Sigmoid colon (tissue), 7 donors: ENCODE measurements at regions of chrX and their contacts with region 1.

Region 1: GRCh38 chrX:12080265-12080664 is 58.0 kb upstream of the FRMPD4 start:
- DNase-seq: no peak
- H3K4me3 ChIP-seq: no peak overlapping the region
- H3K27ac ChIP-seq: no peak overlapping the region
- H3K4me1 ChIP-seq: no peaks in the 10 kb centered on the region
- H3K27me3 ChIP-seq: no peaks in the 10 kb centered on the region
- CTCF ChIP-seq: peak; percentile 24 to 41 (median 32)
- EP300 ChIP-seq: no peak
- POLR2A ChIP-seq: no peak

Region 2: GRCh38 chrX:12447448-12448064 is 367.3 kb after region 1 on chrX:
- intact Hi-C with region 1: loop called (anchors 10 kb)
- DNase-seq: peak; percentile 65
- H3K4me3 ChIP-seq: no peak overlapping the region
- H3K27ac ChIP-seq: no peak overlapping the region
- H3K4me1 ChIP-seq: no peaks in the 10 kb centered on the region
- H3K27me3 ChIP-seq: no peaks in the 10 kb centered on the region
- CTCF ChIP-seq: no peak
- EP300 ChIP-seq: peak in 1 of 4 donors; percentile 37
- POLR2A ChIP-seq: no peak

Region 3: GRCh38 chrX:12567857-12568256 is 487.6 kb after region 1 on chrX:
- intact Hi-C with region 1: loop called (anchors 5 kb)
- DNase-seq: no peak
- H3K4me3 ChIP-seq: no peak overlapping the region
- H3K27ac ChIP-seq: no peak overlapping the region
- H3K4me1 ChIP-seq: no peaks in the 10 kb centered on the region
- H3K27me3 ChIP-seq: no peaks in the 10 kb centered on the region
- CTCF ChIP-seq: peak in 2 of 4 experiments; percentile 19 to 48
- EP300 ChIP-seq: no peak
- POLR2A ChIP-seq: no peak

Region 4: GRCh38 chrX:12701628-12702027 is 621.4 kb after region 1 on chrX:
- intact Hi-C with region 1: loop called (anchors 2 kb)
- DNase-seq: peak; percentile 73
- H3K4me3 ChIP-seq: no peak overlapping the region
- H3K27ac ChIP-seq: no peak overlapping the region
- H3K4me1 ChIP-seq: no peaks in the 10 kb centered on the region
- H3K27me3 ChIP-seq: no peaks in the 10 kb centered on the region
- CTCF ChIP-seq: peak in 2 of 4 experiments; percentile 47
- EP300 ChIP-seq: no peak
- POLR2A ChIP-seq: no peak

Region 5: DNA sequence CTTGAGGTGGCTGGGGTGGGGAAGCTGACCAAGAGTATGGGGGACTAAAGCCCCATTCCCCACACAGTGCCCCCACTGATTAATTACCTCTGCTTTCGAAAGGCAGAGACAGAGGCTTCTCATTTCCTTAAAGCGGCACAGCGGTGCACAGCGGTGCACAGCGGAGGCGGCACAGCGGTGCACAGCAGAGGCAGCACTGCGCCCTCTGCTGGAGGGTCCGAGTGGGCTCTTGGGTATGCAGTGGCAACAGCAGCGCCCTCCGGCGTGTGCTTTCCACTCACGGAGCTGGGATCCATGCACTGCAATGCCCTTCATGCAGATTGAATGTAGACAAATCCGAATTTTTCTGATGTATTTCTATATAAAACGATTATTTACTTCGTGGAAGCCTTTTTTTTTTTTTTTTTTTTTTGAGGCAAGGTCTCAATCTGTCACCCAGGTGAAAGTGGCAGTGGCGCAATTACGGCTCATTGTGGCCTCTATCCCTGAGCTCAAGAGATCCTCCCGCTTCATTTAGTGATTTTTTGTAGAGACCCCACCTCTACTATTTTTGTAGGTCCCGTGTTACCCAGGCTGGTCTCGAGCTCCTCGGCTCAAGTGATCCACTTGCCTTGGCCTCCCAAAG is 691.3 kb after region 1 on chrX:
- intact Hi-C with region 1: loop called (anchors 5 kb)
- DNase-seq: no peak
- H3K4me3 ChIP-seq: no peak overlapping the region
- H3K27ac ChIP-seq: no peak overlapping the region
- H3K4me1 ChIP-seq: no peaks in the 10 kb centered on the region
- H3K27me3 ChIP-seq: no peaks in the 10 kb centered on the region
- CTCF ChIP-seq: no peak
- EP300 ChIP-seq: no peak
- POLR2A ChIP-seq: no peak